CD8-positive, alpha-beta T cell (primary cell): ENCODE measurements at regions of chrX and their contacts with region 1.

Region 1: GRCh38 chrX:85303544-85303943 is 59.8 kb downstream of the ZNF711 start:
- DNase-seq: no peak
- ATAC-seq: no peak
- H3K4me3 ChIP-seq: no peak overlapping the region
- H3K4me3 Mint-ChIP-seq: no peak overlapping the region
- H3K27ac ChIP-seq: no peak overlapping the region
- H3K27ac Mint-ChIP-seq: no peak overlapping the region
- H3K4me1 ChIP-seq: no peaks in the 10 kb centered on the region
- H3K4me1 Mint-ChIP-seq: no peaks in the 10 kb centered on the region
- H3K27me3 ChIP-seq: no peaks in the 10 kb centered on the region
- H3K27me3 Mint-ChIP-seq: no peaks in the 10 kb centered on the region
- CTCF ChIP-seq: no peak

Region 2: GRCh38 chrX:85358686-85359446 is 55.3 kb after region 1 on chrX:
- CTCF ChIA-PET with region 1: no interaction called
- POLR2A ChIA-PET with region 1: no interaction called
- intact Hi-C with region 1: loop called in 1 of 2 experiments (anchors 10 kb)
- DNase-seq: no peak
- ATAC-seq: no peak
- H3K4me3 ChIP-seq: no peak overlapping the region
- H3K4me3 Mint-ChIP-seq: no peak overlapping the region
- H3K27ac ChIP-seq: no peak overlapping the region
- H3K27ac Mint-ChIP-seq: no peak overlapping the region
- H3K4me1 ChIP-seq: no peaks in the 10 kb centered on the region
- H3K4me1 Mint-ChIP-seq: no peaks in the 10 kb centered on the region
- H3K27me3 ChIP-seq: no peaks in the 10 kb centered on the region
- H3K27me3 Mint-ChIP-seq: no peaks in the 10 kb centered on the region
- CTCF ChIP-seq: no peak